Activated T-helper 1 cell treated with anti-CD3 and anti-CD28 coated beads, Interleukin-12 subunit alpha, Interleukin-12 subunit beta, Interleukin-2, Interleukin-4 antibody, amounts not matched to agents 30 ng/mL and 10 ng/mL and 1 ng/mL, durations not matched to agents 14 hours and 24 hours and 36 hours (primary cell): ENCODE measurements at regions of chr10 and their contacts with region 1.

Region 1: GRCh38 chr10:91298224-91298871 is 77.9 kb downstream of the PCGF5 start:
- DNase-seq: peak; percentile 68
- H3K4me3 Mint-ChIP-seq: peak overlapping the region; percentile 62
- H3K27ac Mint-ChIP-seq: no peak overlapping the region
- H3K4me1 Mint-ChIP-seq: peaks cover 9% of the 10 kb centered on the region
- H3K27me3 Mint-ChIP-seq: peaks cover 14% of the 10 kb centered on the region

Region 2: DNA sequence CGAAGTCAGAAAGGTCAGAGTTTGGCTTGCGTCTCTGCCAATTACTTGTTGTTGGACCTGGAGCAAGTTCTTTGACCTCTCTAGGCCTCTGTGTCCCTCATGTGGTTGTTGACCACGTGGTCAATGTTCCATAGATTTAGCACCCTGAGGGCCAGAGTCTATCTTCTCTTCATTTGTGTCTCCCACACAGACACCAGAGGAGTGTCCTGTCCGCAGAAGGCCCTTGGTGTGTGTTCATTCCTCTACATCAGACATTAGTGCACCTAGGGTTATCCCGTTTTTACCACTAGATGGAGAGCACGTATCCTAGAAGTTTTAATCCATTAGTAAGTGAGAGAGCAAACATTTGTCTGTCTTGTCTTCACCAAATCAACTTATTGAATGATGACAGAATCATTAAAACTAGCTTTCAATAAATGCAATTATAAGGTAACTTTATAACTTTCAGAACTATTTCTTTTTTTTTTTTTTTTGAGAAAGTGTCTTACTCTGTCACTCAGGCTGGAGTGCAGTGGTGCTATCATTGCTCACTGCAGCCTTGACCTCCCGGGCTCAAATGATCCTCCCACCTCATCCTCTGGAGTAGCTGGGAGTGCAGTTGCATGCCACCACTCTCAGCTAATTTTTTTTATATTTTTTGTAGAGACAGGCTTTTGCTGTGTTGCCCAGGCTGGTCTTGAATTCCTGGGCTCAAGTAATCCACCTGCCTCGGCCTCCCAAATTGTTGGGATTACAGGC is 255.0 kb before region 1 on chr10:
- intact Hi-C with region 1: no loop called
- DNase-seq: no peak
- H3K4me3 Mint-ChIP-seq: no peak overlapping the region
- H3K27ac Mint-ChIP-seq: no peak overlapping the region
- H3K4me1 Mint-ChIP-seq: peaks cover 2% of the 10 kb centered on the region
- H3K27me3 Mint-ChIP-seq: peaks cover 38% of the 10 kb centered on the region

Region 3: GRCh38 chr10:91367127-91367531 is 68.8 kb after region 1 on chr10:
- intact Hi-C with region 1: loop called (anchors 1 kb)
- DNase-seq: no peak
- H3K4me3 Mint-ChIP-seq: no peak overlapping the region
- H3K27ac Mint-ChIP-seq: no peak overlapping the region
- H3K4me1 Mint-ChIP-seq: no peaks in the 10 kb centered on the region
- H3K27me3 Mint-ChIP-seq: peaks cover 2% of the 10 kb centered on the region

Region 4: GRCh38 chr10:91551856-91552255 is 253.5 kb after region 1 on chr10:
- intact Hi-C with region 1: loop called (anchors 1 kb)
- DNase-seq: no peak
- H3K4me3 Mint-ChIP-seq: no peak overlapping the region
- H3K27ac Mint-ChIP-seq: no peak overlapping the region
- H3K4me1 Mint-ChIP-seq: no peaks in the 10 kb centered on the region
- H3K27me3 Mint-ChIP-seq: peaks cover 1% of the 10 kb centered on the region

Region 5: GRCh38 chr10:91694170-91694794 is 395.9 kb after region 1 on chr10:
- intact Hi-C with region 1: loop called (anchors 1 kb)
- DNase-seq: no peak
- H3K4me3 Mint-ChIP-seq: no peak overlapping the region
- H3K27ac Mint-ChIP-seq: no peak overlapping the region
- H3K4me1 Mint-ChIP-seq: peaks cover 9% of the 10 kb centered on the region
- H3K27me3 Mint-ChIP-seq: peaks cover 3% of the 10 kb centered on the region